Endothelial cell of umbilical vein (primary cell): ENCODE measurements at regions of chr9 and their contacts with region 1.

Region 1: GRCh38 chr9:113501129-113501686 is 37.7 kb downstream of the RGS3 start:
- DNase-seq: peak; percentile 98
- H3K4me3 ChIP-seq: peak overlapping the region; percentile 94 to 99 (median 94)
- H3K27ac ChIP-seq: peak overlapping the region; percentile 100
- H3K4me1 ChIP-seq: peaks cover 34% of the 10 kb centered on the region
- H3K27me3 ChIP-seq: no peaks in the 10 kb centered on the region
- CTCF ChIP-seq: peak in 1 of 2 donors; percentile 22
- POLR2A ChIP-seq: peak; percentile 88

Region 2: DNA sequence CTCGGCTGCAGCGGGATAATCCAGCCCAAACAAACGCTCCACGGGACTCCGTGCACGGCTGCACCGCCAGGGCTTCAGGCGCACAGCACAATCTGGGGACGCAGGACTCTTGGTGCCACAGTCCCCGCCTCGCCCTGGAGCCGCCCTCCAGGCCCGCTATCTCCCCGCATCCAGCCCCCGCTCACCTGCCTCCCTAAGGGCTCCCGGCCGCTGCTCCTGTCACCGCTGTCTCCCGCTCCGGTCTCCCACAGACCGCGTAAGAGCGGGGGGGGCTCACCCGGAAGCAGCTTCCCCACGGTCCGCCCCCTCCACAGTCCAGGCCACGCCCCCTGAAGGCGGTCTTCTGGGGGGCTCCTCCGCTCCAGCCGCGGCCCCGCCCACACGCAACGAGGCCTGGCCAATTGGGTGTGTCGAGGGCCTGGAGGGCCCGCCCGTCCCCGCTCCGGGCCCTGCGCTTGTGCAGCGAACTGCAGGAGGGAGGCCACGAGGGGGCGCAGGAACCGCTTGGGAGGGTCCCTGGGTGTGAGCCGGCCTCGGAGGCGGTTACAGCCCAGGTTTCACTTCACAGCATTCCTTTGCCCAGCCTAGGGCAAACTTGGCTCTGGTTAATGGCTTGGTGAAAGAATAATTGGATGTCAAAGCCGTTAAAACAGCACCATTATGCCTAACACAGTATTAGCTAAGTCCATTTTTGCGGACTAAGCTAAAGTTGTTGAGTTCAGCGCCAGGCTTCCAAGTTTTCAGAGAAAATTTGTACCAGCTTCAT is 100.0 kb before region 1 on chr9 and contains the start of gene ALAD:
- CTCF ChIA-PET with region 1: interaction called, 3 read pairs
- POLR2A ChIA-PET with region 1: no interaction called
- dilution Hi-C with region 1: no loop called
- intact Hi-C with region 1: loop called (anchors 1 kb)
- DNase-seq: peak; percentile 99
- H3K4me3 ChIP-seq: peak within 1 kb of the TSS; percentile 48 to 84 (median 51)
- H3K27ac ChIP-seq: no peak within 1 kb of the TSS
- H3K4me1 ChIP-seq: peaks cover 24% of the 10 kb centered on the region
- H3K27me3 ChIP-seq: no peaks in the 10 kb centered on the region
- CTCF ChIP-seq: peak; percentile 99
- POLR2A ChIP-seq: peak; percentile 68
- total RNA-seq, gene ALAD: 29.5 TPM in 2 replicates

Region 3: DNA sequence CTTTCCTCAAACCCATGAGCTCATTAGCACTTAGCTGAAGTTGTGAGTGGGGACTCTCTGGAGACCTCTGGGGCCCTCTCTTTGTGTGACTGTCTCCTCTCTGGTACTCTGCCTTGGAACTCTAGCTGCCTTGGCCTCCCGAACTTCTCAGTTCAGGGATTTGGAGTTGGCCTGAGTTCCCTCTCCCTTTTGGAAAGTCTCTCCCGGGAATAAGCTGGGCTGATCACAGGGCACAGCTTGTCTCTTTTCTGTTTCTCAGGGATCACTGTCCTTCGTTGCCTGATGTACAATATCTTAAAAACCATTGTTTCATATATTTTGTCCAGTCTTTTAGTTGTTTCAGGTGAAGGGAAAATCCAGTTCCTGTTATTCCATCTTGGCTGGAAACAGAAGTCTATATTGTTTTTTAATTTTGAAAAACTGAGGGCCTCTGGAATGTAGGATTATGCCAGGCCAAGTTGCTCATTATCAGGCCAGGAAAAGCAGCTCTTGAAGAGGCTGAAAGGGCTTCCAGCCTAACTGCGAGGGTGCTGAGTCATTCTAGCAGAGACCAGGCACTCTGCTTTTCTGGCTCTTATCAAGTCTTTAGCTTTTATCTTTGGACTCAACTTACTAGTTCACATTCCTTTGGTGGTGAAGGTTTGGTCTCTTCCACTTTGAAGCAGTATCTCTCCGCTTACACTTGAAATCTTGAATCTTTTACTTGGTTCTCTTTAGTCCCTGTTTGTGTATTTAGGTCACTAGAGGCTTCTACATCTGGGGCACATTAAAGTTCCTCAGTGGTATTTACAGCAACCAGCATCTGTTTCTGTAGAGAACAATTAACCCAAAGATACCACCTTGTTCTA is 46.1 kb before region 1 on chr9:
- CTCF ChIA-PET with region 1: interaction called, 24 read pairs
- POLR2A ChIA-PET with region 1: interaction called, 10 read pairs
- dilution Hi-C with region 1: no loop called
- intact Hi-C with region 1: loop called (anchors 1 kb)
- DNase-seq: peak; percentile 97
- H3K4me3 ChIP-seq: no peak overlapping the region
- H3K27ac ChIP-seq: peak overlapping the region; percentile 94
- H3K4me1 ChIP-seq: peaks cover 22% of the 10 kb centered on the region
- H3K27me3 ChIP-seq: no peaks in the 10 kb centered on the region
- CTCF ChIP-seq: no peak
- POLR2A ChIP-seq: no peak

Region 4: DNA sequence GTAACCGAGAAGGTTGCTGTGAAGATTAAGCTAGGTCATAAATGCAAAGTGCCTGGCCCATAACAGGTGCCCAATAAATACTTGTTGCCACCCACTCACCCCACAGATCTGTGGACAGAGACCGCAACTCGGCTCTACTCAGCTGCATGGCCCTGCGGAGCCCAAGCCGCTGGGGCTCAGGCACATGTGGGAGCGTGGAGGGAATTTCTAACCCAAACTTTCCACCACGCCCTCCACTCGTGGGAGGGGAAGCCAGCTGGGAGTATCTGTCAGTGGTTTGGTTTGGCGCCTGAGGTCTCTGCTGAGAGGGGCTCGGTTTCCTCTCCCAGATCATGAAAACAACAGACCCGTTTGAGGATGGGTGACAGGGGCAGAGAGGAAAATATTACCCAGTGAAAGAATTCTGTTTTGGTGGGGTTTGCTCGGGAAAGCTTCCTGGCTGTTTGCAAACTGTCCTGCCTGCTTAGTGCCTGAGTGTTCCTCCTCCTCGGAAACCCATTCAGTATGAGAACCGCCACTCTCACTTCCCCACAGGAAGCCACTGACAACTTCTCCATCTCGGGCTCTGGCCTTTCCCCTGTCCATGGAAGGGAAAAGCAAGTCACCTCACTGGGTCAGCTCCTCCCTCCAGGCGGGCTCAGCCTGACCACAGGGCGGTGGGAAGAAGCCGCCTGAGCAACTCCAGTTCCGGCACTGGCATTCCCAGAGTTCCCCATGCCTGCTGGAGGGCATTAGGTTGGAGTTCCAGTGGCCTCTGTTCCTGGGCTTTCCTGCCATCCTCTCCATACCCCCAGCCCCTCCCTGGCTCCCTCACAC is 22.4 kb after region 1 on chr9:
- CTCF ChIA-PET with region 1: interaction called, 5 read pairs
- POLR2A ChIA-PET with region 1: no interaction called
- dilution Hi-C with region 1: no loop called
- intact Hi-C with region 1: loop called (anchors 1 kb)
- DNase-seq: peak; percentile 85
- H3K4me3 ChIP-seq: no peak overlapping the region
- H3K27ac ChIP-seq: peak overlapping the region; percentile 80
- H3K4me1 ChIP-seq: peaks cover 65% of the 10 kb centered on the region
- H3K27me3 ChIP-seq: no peaks in the 10 kb centered on the region
- CTCF ChIP-seq: no peak
- POLR2A ChIP-seq: peak; percentile 21